ENCODE measurements at regions of chr1 and their contacts with region 1.

Region 1: DNA sequence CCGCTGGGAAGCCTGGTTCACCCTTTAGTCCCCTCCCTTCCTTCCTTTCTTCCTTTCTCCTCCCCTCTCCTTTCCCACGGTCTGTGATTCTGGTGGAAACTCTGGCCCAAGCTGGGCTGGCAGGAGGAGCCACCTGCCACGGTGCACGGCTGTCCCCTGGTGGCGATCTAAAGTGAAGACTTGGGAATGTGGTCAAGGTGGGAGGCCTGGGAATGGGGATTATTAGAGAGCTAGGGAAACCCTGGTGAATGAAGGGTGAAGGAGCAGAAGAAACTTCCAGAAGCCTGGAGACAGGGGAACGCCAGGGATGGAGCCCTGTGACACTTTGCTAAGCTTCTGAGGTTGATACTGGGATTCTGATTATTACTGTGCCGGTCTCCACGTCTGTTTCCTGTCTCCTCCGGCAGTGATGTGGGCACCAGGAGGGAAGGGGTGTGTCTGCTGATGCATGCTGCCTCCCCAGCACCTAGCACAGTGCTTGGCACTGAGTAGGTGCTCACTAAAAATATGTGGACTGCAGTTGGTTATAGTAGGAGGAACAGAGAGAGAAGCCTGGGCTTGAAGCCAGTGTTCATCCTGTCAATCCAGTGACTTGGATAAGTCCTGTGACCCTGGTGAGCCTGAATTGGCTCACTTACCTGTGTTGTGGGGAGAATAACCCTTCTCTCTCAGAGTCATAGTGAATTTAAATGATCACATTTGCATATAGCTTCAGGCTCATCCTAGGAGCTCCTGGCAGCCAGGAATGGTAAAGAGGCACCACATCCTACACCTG is 71.2 kb upstream of the NBPF3 start:
- DNase-seq: no peak
- H3K4me3 ChIP-seq: no peak overlapping the region
- H3K27ac ChIP-seq: no peak overlapping the region
- H3K4me1 ChIP-seq: peaks cover 0 to 12% (median 4%) of the 10 kb centered on the region in 3 donors
- H3K27me3 ChIP-seq: no peaks in the 10 kb centered on the region
- CTCF ChIP-seq: peak; percentile 97 to 100 (median 99)
- POLR2A ChIP-seq: no peak

Region 2: DNA sequence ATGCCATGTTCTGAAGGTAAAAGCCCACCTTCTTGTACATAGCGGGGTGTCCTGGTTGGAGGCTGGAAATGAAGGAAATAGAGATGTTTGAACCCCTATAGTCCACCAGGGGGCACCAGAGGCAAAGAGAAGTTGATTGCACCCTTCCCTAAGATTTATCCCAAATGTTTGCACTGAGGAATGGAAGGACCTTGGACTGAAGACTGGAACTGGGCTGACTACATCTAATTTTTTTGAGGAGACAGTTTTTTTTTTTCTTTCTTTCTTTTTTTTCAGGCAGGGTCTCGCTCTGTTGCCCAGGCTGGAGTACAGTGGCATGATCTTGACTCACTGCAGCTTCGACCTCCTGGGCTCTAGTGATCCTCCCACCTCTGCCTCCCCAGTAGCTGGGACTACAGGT is 136.7 kb before region 1 on chr1:
- intact Hi-C with region 1: loop called (anchors 5 kb)
- DNase-seq: no peak
- H3K4me3 ChIP-seq: no peak overlapping the region
- H3K27ac ChIP-seq: no peak overlapping the region
- H3K4me1 ChIP-seq: no peaks in the 10 kb centered on the region
- H3K27me3 ChIP-seq: no peaks in the 10 kb centered on the region
- CTCF ChIP-seq: peak; percentile 56 to 83 (median 80)
- POLR2A ChIP-seq: no peak

Region 3: DNA sequence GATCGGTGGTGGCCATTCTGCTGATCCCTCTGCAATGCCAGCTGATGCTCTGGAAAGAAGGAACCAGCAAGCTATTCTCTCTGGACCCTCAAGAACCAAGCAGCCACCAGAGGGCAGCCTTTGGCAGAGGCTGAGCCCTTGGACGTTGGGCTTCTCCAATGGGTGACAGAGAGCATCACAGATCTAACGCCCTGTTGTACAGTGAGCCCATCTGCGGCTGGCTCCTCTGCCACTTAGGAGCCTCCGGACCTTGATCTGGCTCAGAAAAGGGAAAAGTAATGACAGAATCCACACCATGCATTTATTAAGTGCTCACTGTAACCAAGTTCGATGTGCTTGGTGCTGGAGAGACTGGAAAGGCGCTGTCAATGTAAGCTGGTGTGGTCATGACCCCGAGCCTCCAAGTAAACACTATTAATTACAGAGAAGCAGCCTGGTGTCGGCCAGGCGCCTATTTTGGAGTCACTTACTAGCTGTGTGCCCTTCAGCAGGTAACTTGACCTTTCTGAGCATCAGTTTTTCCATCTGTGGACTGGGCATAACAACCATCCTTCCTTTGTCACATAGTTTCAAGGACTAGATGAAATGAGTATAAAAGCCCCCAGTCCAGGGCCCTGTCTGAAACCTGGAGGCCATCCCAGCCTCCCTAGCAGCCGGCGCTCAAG is 113.3 kb before region 1 on chr1:
- intact Hi-C with region 1: loop called (anchors 2 kb)
- DNase-seq: peak; percentile 35
- H3K4me3 ChIP-seq: no peak overlapping the region
- H3K27ac ChIP-seq: peak overlapping the region in 3 of 4 donors; percentile 5 to 53 (median 49)
- H3K4me1 ChIP-seq: peaks cover 9 to 82% (median 24%) of the 10 kb centered on the region in 3 donors
- H3K27me3 ChIP-seq: no peaks in the 10 kb centered on the region
- CTCF ChIP-seq: peak; percentile 76 to 91 (median 86)
- POLR2A ChIP-seq: no peak

Region 4: GRCh38 chr1:21490774-21491553 is 122.3 kb after region 1 on chr1:
- intact Hi-C with region 1: no loop called
- DNase-seq: no peak
- H3K4me3 ChIP-seq: no peak overlapping the region
- H3K27ac ChIP-seq: no peak overlapping the region
- H3K4me1 ChIP-seq: peaks cover 0 to 15% (median 3%) of the 10 kb centered on the region in 3 donors
- H3K27me3 ChIP-seq: peaks cover 0 to 23% (median 0%) of the 10 kb centered on the region in 4 donors
- CTCF ChIP-seq: peak in 5 of 6 experiments; percentile 39 to 77 (median 51)
- POLR2A ChIP-seq: no peak

Region 5: DNA sequence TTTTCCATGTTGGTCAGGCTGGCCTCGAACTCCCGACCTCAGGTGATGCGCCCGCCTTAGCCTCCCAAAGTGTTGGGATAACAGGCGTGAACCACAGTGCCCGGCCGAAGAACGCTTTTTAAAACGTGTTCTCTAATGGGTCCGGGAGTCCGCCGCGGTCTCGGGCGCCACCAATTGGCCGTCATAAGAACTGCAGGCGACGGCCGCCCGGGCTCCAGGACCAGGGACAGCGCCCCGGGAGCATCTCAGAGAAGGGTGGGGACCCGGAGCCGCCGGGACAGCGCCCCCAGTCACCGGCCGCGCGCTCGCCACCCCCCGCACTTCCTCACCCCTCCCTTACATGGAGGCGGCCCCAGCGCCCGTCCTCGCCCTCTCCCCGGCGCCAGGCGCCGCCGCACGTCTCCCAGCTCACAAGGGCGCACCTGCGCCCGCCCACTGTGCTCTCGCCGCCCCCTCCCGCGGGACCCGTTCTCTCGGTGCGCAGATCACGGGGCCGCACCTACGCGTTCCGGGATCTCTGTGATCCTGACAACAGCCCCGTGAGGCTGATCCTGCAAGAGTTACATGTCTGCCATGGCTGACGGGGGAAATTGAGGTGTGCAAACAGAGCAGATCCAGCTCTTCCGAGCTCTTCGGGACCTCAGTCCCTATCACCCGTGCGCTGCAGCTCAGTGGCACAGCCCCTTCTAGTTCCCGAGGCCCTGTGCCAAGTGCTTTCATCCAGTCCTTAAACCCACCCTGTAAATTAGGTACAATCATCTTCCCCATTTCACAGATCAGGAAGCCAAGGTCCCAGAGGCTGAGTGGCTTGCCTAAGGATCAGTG is 290.6 kb after region 1 on chr1:
- intact Hi-C with region 1: loop called (anchors 10 kb)
- DNase-seq: peak; percentile 14
- H3K4me3 ChIP-seq: peak overlapping the region in 1 of 4 donors; percentile 46
- H3K27ac ChIP-seq: no peak overlapping the region
- H3K4me1 ChIP-seq: peaks cover 4 to 22% (median 4%) of the 10 kb centered on the region in 3 donors
- H3K27me3 ChIP-seq: peaks cover 0 to 52% (median 0%) of the 10 kb centered on the region in 4 donors
- CTCF ChIP-seq: peak; percentile 88 to 98 (median 95)
- POLR2A ChIP-seq: no peak